Activated CD4-positive, alpha-beta T cell treated with anti-CD3 and anti-CD28 coated beads, Interleukin-2, amount 10 ng/mL, durations not matched to agents 24 days and 14 days (primary cell): ENCODE measurements at regions of chr18 and their contacts with region 1.

Region 1: GRCh38 chr18:14086458-14087231 is 45.6 kb downstream of the ZNF519 start:
- DNase-seq: peak; percentile 63
- H3K4me3 Mint-ChIP-seq: no peak overlapping the region
- H3K27ac Mint-ChIP-seq: no peak overlapping the region
- H3K4me1 Mint-ChIP-seq: no peaks in the 10 kb centered on the region
- H3K27me3 Mint-ChIP-seq: no peaks in the 10 kb centered on the region

Region 2: GRCh38 chr18:13587937-13588336 is 498.7 kb before region 1 on chr18:
- intact Hi-C with region 1: no loop called
- DNase-seq: peak; percentile 54
- H3K4me3 Mint-ChIP-seq: peak overlapping the region; percentile 68
- H3K27ac Mint-ChIP-seq: peak overlapping the region; percentile 87
- H3K4me1 Mint-ChIP-seq: peaks cover 65% of the 10 kb centered on the region
- H3K27me3 Mint-ChIP-seq: no peaks in the 10 kb centered on the region

Region 3: GRCh38 chr18:13813271-13813849 is 273.3 kb before region 1 on chr18:
- intact Hi-C with region 1: loop called (anchors 1 kb)
- DNase-seq: peak; percentile 87
- H3K4me3 Mint-ChIP-seq: no peak overlapping the region
- H3K27ac Mint-ChIP-seq: no peak overlapping the region
- H3K4me1 Mint-ChIP-seq: no peaks in the 10 kb centered on the region
- H3K27me3 Mint-ChIP-seq: peaks cover 20% of the 10 kb centered on the region

Region 4: DNA sequence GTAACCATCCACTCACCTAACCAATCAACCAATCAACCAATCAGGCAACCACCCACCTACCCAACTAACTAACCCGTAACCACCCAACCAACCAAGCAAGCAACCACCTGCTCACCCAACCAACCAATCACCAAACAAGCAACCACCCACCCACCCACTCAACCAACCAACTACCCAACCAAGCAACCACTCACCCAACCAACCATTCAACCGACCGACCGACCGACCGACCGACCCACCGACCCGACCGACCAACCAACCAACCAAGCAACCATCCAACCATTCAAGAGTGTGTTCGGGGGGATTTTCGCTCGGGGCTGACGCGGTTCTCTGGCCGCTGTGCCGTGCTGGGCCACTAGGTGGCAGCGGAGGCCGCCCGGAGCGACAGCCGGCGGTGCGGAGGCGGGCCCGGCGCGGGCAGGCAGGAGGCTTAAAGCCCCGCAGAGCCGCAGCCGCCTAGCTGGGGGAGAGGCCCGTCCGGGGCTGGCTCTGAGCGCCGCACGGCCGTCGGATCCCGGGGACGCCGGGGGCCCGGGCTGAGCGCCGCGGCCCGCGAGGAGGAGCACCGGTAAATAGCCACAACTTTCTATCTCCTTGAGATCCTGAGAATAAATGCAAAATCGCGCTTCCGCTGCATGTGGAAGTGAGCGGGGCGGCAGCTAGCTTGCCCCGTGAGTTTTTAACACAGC is 262.8 kb before region 1 on chr18 and contains the start of gene MC5R:
- intact Hi-C with region 1: loop called (anchors 1 kb)
- DNase-seq: peak; percentile 92
- H3K4me3 Mint-ChIP-seq: peak within 1 kb of the TSS; percentile 64
- H3K27ac Mint-ChIP-seq: peak within 1 kb of the TSS; percentile 12
- H3K4me1 Mint-ChIP-seq: no peaks in the 10 kb centered on the region
- H3K27me3 Mint-ChIP-seq: peaks cover 16% of the 10 kb centered on the region
- total RNA-seq, gene MC5R: not detected in 2 replicates

Region 5: GRCh38 chr18:13989199-13989598 is 97.4 kb before region 1 on chr18:
- intact Hi-C with region 1: no loop called
- DNase-seq: no peak
- H3K4me3 Mint-ChIP-seq: no peak overlapping the region
- H3K27ac Mint-ChIP-seq: no peak overlapping the region
- H3K4me1 Mint-ChIP-seq: no peaks in the 10 kb centered on the region
- H3K27me3 Mint-ChIP-seq: no peaks in the 10 kb centered on the region